MCF 10A (cell line): ENCODE measurements at regions of chr3 and their contacts with region 1.

Region 1: GRCh38 chr3:156760333-156760732 is 65.8 kb upstream of the LEKR1 start:
- DNase-seq: no peak
- H3K4me3 Mint-ChIP-seq: no peak overlapping the region
- H3K27ac Mint-ChIP-seq: no peak overlapping the region
- H3K4me1 Mint-ChIP-seq: peaks cover 21% of the 10 kb centered on the region
- H3K27me3 Mint-ChIP-seq: no peaks in the 10 kb centered on the region
- CTCF ChIP-seq: no peak

Region 2: GRCh38 chr3:155880286-155880685 is 880.0 kb before region 1 on chr3:
- CTCF ChIA-PET with region 1: no interaction called
- POLR2A ChIA-PET with region 1: no interaction called
- intact Hi-C with region 1: no loop called
- DNase-seq: no peak
- H3K4me3 Mint-ChIP-seq: no peak overlapping the region
- H3K27ac Mint-ChIP-seq: no peak overlapping the region
- H3K4me1 Mint-ChIP-seq: peaks cover 24% of the 10 kb centered on the region
- H3K27me3 Mint-ChIP-seq: no peaks in the 10 kb centered on the region
- CTCF ChIP-seq: no peak

Region 3: DNA sequence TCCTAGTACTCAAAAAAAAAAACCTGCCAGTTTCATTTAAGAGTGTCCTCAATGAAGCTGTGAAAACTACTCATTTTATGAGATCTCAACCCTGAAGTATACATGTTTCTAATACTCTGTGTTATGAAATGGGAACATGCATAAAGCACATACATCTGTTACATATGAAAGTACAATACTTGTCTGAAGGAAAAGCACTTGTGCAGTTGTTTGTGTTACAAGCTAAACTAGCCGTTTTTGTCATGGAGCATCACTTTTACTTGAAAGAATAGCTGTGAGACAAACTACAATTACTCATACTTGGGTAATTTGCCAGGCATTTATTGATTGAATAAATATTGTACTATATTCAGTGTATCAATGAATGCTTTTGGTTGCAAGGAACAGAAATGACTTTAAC is 13.3 kb before region 1 on chr3:
- CTCF ChIA-PET with region 1: interaction called, 4 read pairs
- POLR2A ChIA-PET with region 1: interaction called, 10 read pairs
- intact Hi-C with region 1: no loop called
- DNase-seq: no peak
- H3K4me3 Mint-ChIP-seq: no peak overlapping the region
- H3K27ac Mint-ChIP-seq: no peak overlapping the region
- H3K4me1 Mint-ChIP-seq: no peaks in the 10 kb centered on the region
- H3K27me3 Mint-ChIP-seq: no peaks in the 10 kb centered on the region
- CTCF ChIP-seq: no peak

Region 4: DNA sequence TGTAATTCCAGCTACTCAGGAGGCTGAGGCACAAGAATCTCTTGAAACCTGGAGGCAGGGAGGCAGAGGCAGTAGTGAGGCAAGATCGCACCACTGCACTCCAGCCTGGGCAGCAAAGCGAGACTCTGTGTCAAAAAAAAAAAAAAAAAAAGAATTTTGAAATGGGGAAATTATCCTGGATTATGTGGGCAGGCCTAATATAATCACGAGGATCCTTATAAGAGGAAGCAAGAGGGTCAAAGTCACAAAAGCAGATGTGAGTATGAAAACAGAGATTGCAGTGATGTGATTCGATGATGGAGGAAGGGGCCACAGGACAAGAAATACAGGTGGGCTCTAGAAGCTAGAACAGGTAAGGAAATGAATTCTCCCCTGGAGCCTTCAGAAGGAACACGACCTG is 225.4 kb after region 1 on chr3:
- CTCF ChIA-PET with region 1: no interaction called
- POLR2A ChIA-PET with region 1: no interaction called
- intact Hi-C with region 1: no loop called
- DNase-seq: no peak
- H3K4me3 Mint-ChIP-seq: no peak overlapping the region
- H3K27ac Mint-ChIP-seq: no peak overlapping the region
- H3K4me1 Mint-ChIP-seq: no peaks in the 10 kb centered on the region
- H3K27me3 Mint-ChIP-seq: no peaks in the 10 kb centered on the region
- CTCF ChIP-seq: no peak